H1 (cell line): ENCODE measurements at regions of chr4 and their contacts with region 1.

Region 1: DNA sequence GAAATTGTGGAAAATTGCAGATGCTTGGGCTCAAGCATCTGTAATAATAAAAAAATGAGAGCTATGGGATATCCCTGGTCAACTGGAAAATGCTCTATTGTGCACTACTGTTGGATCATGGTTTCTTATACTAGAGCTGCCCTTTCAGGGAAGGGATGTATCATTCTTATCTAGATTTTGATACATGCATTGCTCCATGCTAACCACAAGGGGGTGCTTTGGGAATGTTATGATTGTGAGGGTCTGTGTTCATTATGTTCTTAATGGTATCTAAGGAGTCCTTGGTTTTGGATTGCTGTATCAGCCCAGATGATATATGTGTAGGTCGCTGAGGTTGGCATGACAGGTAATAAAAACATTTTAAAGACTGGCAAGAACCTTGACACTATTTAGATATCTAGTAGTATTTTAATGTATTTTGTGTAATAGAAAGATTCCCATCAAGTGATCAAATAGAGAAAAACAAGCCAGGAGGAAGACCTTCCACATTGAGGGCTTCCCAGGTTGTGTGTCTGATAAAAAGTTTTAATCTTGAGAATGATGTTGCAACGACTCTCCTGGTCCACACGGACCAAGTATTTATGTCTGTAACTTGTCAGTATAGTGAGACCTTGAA is 49.2 kb upstream of the TLR2 start:
- DNase-seq: no peak
- H3K4me3 ChIP-seq: no peak overlapping the region
- H3K27ac ChIP-seq: no peak overlapping the region
- H3K4me1 ChIP-seq: peaks cover 0 to under 1% (median 0%) of the 10 kb centered on the region in 4 experiments; a peak in 1 of 7 replicates
- H3K27me3 ChIP-seq: no peaks in the 10 kb centered on the region
- CTCF ChIP-seq: peak in 2 of 3 experiments; percentile 55 to 78; a peak in 3 of 4 replicates
- EP300 ChIP-seq: no peak
- POLR2A ChIP-seq: no peak
- RAD21 ChIP-seq: peak; percentile 63 to 64

Region 2: GRCh38 chr4:153611679-153612078 is 23.2 kb before region 1 on chr4:
- CTCF ChIA-PET with region 1: interaction called, 10 read pairs
- POLR2A ChIA-PET with region 1: interaction called, 3 read pairs
- DNase-seq: no peak
- H3K4me3 ChIP-seq: no peak overlapping the region
- H3K27ac ChIP-seq: no peak overlapping the region
- H3K4me1 ChIP-seq: no peaks in the 10 kb centered on the region
- H3K27me3 ChIP-seq: no peaks in the 10 kb centered on the region
- CTCF ChIP-seq: no peak
- EP300 ChIP-seq: no peak
- POLR2A ChIP-seq: no peak
- RAD21 ChIP-seq: no peak

Region 3: DNA sequence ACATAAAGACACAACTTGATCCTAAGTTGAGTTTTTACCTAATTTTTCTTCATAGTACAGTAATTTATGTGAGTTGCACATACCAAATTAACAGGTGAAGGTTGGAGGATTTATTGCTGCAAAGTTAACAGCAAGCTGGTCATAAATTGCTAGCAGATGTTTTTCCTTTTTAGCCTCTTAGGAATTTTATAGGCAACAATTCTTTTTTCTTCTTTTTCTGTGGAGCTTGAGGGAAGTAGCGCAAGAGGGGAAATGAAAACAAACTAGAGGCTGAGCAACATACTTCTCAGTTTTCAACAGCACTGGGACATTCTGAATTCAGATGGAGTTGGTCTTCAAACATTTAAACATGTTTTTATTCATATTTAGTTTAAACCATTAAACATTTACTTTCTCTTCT is 14.5 kb before region 1 on chr4:
- CTCF ChIA-PET with region 1: interaction called, 16 read pairs
- POLR2A ChIA-PET with region 1: interaction called, 3 read pairs
- DNase-seq: no peak
- H3K4me3 ChIP-seq: no peak overlapping the region
- H3K27ac ChIP-seq: no peak overlapping the region
- H3K4me1 ChIP-seq: peaks cover 0 to 12% (median 11%) of the 10 kb centered on the region in 4 experiments; a peak in 4 of 7 replicates
- H3K27me3 ChIP-seq: no peaks in the 10 kb centered on the region
- CTCF ChIP-seq: no peak
- EP300 ChIP-seq: no peak
- POLR2A ChIP-seq: no peak
- RAD21 ChIP-seq: no peak

Region 4: GRCh38 chr4:153759407-153760316 is 124.8 kb after region 1 on chr4 and contains the start of gene RNF175:
- CTCF ChIA-PET with region 1: interaction called, 17 read pairs
- POLR2A ChIA-PET with region 1: interaction called, 4 read pairs
- DNase-seq: peak in 1 of 2 experiments; percentile 71
- H3K4me3 ChIP-seq: peak within 1 kb of the TSS; percentile 70 to 87 (median 72)
- H3K27ac ChIP-seq: peak within 1 kb of the TSS; percentile 60; the same call in 1 of the 2 replicates
- H3K4me1 ChIP-seq: peaks cover 11 to 27% (median 21%) of the 10 kb centered on the region in 4 experiments; a peak in 6 of 7 replicates
- H3K27me3 ChIP-seq: peaks cover 0 to 4% (median 0%) of the 10 kb centered on the region in 4 experiments; a peak in 5 of 7 replicates
- CTCF ChIP-seq: no peak
- EP300 ChIP-seq: no peak
- POLR2A ChIP-seq: no peak; a peak in 1 of 3 replicates
- RAD21 ChIP-seq: no peak
- total RNA-seq, gene RNF175: 7.3 and 7.9 TPM in 2 replicates